BJ (cell line): ENCODE measurements at regions of chr17 and their contacts with region 1.

Region 1: DNA sequence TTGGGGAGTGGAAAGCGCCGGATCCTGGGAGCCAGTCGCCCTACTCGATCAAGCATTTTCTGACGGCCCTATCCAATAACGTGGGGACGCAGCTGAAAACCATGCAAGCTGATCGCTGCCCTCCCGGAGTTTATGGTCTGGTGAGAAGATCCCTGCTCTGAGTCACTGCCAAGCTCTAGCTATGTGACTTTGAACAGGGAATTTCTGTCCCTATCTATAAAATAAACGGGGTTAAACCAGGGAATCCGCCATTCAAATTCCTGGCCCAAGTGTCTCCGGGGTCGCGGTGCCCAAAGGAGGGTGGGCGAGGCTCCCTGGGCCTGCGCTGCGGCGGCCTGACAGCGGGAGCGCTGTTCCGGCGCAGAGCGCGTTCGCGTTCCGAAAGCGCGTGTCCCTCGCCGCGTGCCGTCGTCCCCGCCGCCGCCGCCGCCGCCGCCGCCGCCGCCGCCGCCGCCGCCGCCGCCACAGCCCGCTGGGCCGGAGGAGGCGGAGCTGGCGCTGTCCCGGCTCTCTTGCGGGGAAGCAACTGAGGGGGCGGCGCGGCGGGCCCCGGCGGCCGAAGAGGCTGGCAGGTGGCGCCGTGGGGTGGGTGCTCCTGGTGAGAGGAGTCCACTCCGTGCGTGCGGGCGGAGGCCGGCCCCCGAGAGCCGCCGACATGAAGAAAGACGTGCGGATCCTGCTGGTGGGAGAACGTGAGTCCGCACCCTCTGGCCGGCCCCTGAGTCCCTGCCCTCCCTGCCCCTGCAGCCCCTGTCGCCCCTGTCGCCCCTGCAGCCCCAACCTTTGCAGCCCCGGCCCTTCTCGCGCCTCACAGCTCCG is at the start of gene RHOT1:
- DNase-seq: no peak
- H3K4me3 ChIP-seq: peak within 1 kb of the TSS; percentile 75
- H3K27me3 ChIP-seq: no peaks in the 10 kb centered on the region
- CTCF ChIP-seq: peak; percentile 67
- polyA plus RNA-seq, gene RHOT1: 27.4 and 46.3 TPM in 2 replicates

Region 2: DNA sequence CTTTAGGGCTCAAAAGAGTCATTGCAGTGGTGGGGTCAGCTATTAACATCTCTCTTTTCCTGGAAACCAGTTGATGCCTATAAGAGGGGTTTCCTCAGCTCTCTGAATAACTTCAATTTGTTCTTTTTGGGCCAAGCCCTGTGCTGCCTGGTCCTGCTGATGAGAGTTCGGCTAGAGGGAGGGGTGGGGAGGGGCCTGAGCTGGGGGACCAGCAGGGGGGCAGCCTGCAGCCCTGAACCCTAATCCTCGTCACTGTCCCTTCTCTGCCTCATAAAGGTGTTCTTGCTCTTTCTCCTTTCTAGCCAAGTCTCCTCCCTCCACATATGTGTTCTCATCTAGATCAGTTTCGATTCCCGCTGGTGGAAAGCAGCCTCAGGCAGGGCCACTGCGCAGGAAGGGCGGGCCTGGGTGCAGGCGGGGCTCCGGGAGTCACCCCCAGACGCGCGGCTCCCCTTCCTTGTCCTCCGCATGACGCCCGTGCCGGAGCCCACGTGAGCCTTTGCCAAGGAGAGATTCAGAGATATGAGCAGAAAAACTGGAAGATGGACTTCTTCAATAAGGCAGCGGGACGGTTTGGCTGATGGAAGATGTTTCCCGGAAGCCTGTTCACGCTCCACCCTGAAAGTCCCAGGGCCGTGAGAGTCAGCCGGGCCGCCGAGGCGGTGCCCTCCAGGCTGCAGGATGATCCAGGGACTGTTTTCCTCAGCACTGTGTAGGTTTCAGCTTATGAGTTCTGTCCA is 14.9 kb before region 1 on chr17:
- CTCF ChIA-PET with region 1: interaction called, 14 read pairs
- POLR2A ChIA-PET with region 1: interaction called, 3 read pairs
- DNase-seq: no peak
- H3K4me3 ChIP-seq: peak overlapping the region; percentile 73
- H3K27me3 ChIP-seq: no peaks in the 10 kb centered on the region
- CTCF ChIP-seq: no peak